AG04450 (cell line): ENCODE measurements at regions of chr9 and their contacts with region 1.

Region 1: DNA sequence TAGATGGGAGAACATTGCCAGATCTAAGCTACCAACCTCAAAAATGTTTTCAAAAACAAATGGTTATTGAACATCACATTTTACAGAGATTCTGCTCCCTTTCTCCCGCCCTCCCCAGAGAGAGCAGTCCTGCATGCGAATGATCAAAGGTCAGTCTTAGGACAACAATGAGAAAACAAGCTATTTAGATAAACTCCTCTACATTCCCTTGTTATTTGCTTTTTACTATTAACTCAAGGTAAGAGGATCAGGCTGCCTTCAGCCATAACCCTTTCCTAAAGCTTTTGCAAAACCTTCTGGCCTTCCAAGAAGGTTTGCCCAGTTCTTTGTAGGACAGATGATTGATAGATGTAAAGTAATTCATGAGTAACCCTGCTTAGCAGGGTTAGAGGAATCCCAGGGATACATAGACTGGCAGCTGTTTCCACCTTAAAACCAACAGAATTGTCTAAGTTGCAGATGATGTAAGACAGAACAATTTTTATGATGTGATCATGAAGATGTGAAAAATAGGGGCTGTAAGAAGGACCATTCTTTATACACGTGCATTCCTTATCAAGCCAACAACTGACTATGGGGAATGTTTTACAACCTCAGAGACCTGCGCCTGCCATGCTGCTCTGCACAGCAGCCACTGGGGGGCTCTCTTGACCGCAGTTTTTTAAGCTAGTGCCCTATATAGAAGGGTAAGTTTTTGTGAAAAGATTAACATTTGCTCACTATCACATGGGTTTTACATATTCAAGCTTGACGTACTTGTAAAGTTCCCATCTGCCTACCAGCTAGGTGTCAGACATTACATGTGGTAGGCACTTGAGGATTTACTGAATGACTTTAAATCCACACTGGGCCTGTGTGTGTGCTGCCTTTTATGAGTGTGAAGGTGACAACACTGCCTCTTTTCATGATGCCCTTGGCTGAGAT is 2.3 kb upstream of the ZNF782 start:
- DNase-seq: peak; percentile 32
- H3K4me3 ChIP-seq: no peak overlapping the region
- H3K27ac ChIP-seq: no peak overlapping the region
- H3K27me3 ChIP-seq: no peaks in the 10 kb centered on the region
- CTCF ChIP-seq: peak; percentile 91

Region 2: GRCh38 chr9:96751815-96752214 is 104.8 kb before region 1 on chr9:
- CTCF ChIA-PET with region 1: no interaction called
- POLR2A ChIA-PET with region 1: no interaction called
- DNase-seq: no peak
- H3K4me3 ChIP-seq: no peak overlapping the region
- H3K27ac ChIP-seq: no peak overlapping the region
- H3K27me3 ChIP-seq: no peaks in the 10 kb centered on the region
- CTCF ChIP-seq: no peak

Region 3: GRCh38 chr9:97237951-97238851 is 381.6 kb after region 1 on chr9:
- CTCF ChIA-PET with region 1: interaction called, 12 read pairs
- POLR2A ChIA-PET with region 1: no interaction called
- DNase-seq: peak; percentile 60
- H3K4me3 ChIP-seq: peak overlapping the region; percentile 71
- H3K27ac ChIP-seq: peak overlapping the region; percentile 82
- H3K27me3 ChIP-seq: no peaks in the 10 kb centered on the region
- CTCF ChIP-seq: no peak

Region 4: GRCh38 chr9:97398999-97399758 is 542.6 kb after region 1 on chr9:
- CTCF ChIA-PET with region 1: interaction called, 57 read pairs
- POLR2A ChIA-PET with region 1: no interaction called
- DNase-seq: peak; percentile 30
- H3K4me3 ChIP-seq: no peak overlapping the region
- H3K27ac ChIP-seq: no peak overlapping the region
- H3K27me3 ChIP-seq: no peaks in the 10 kb centered on the region
- CTCF ChIP-seq: peak; percentile 94

Region 5: GRCh38 chr9:97411789-97412625 is 555.4 kb after region 1 on chr9 and contains the start of gene TDRD7:
- CTCF ChIA-PET with region 1: interaction called, 34 read pairs
- POLR2A ChIA-PET with region 1: no interaction called
- DNase-seq: peak; percentile 42
- H3K4me3 ChIP-seq: peak within 1 kb of the TSS; percentile 72
- H3K27ac ChIP-seq: no peak within 1 kb of the TSS
- H3K27me3 ChIP-seq: peaks cover 10% of the 10 kb centered on the region
- CTCF ChIP-seq: peak; percentile 96
- polyA plus RNA-seq, gene TDRD7: 7.3 and 8.2 TPM in 2 replicates